ENCODE measurements at regions of chr13 and their contacts with region 1.

Region 1: DNA sequence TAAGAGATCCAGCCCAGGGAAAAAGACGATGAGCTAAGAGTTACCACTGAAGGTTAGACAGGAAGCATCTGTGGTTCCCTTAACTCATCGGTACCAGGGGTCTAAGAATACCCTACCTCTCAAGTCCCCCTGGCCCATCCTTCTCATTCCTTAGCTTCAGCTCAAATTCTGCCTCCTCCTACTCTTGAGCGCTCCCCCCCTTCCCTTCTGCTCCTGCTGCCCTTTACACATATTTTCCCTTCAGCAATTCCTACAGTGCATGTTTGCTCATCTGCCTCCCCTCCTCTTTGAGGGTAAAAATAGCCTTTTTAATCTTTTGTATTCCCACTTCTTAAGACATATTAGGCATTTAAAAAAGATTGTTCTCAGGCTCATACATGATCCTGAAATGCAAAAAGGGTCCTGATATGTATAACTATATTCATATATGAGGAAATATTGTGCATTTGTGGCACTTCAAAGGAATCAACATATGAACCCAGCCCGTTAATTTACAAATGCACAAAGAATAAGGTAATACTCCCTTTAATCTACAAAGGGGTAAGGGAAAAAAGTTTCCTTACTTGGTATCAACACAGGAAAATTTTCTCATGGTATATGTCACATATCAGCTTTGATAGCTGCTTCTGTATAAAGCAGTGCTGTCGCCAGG is 33.1 kb downstream of the LNX2 start:
- DNase-seq: no peak
- H3K4me3 ChIP-seq: no peak overlapping the region
- H3K27ac ChIP-seq: no peak overlapping the region
- H3K4me1 ChIP-seq: no peaks in the 10 kb centered on the region
- H3K27me3 ChIP-seq: no peaks in the 10 kb centered on the region
- CTCF ChIP-seq: no peak
- POLR2A ChIP-seq: no peak

Region 2: GRCh38 chr13:26806891-26807290 is 780.3 kb before region 1 on chr13:
- intact Hi-C with region 1: loop called (anchors 5 kb)
- DNase-seq: no peak
- H3K4me3 ChIP-seq: no peak overlapping the region
- H3K27ac ChIP-seq: no peak overlapping the region
- H3K4me1 ChIP-seq: no peaks in the 10 kb centered on the region
- H3K27me3 ChIP-seq: no peaks in the 10 kb centered on the region
- CTCF ChIP-seq: no peak
- POLR2A ChIP-seq: no peak

Region 3: GRCh38 chr13:27607125-27607524 is 19.9 kb after region 1 on chr13:
- intact Hi-C with region 1: no loop called
- DNase-seq: no peak
- H3K4me3 ChIP-seq: no peak overlapping the region
- H3K27ac ChIP-seq: no peak overlapping the region
- H3K4me1 ChIP-seq: no peaks in the 10 kb centered on the region
- H3K27me3 ChIP-seq: no peaks in the 10 kb centered on the region
- CTCF ChIP-seq: no peak
- POLR2A ChIP-seq: no peak